ENCODE measurements at regions of chr11 and their contacts with region 1.

Region 1: DNA sequence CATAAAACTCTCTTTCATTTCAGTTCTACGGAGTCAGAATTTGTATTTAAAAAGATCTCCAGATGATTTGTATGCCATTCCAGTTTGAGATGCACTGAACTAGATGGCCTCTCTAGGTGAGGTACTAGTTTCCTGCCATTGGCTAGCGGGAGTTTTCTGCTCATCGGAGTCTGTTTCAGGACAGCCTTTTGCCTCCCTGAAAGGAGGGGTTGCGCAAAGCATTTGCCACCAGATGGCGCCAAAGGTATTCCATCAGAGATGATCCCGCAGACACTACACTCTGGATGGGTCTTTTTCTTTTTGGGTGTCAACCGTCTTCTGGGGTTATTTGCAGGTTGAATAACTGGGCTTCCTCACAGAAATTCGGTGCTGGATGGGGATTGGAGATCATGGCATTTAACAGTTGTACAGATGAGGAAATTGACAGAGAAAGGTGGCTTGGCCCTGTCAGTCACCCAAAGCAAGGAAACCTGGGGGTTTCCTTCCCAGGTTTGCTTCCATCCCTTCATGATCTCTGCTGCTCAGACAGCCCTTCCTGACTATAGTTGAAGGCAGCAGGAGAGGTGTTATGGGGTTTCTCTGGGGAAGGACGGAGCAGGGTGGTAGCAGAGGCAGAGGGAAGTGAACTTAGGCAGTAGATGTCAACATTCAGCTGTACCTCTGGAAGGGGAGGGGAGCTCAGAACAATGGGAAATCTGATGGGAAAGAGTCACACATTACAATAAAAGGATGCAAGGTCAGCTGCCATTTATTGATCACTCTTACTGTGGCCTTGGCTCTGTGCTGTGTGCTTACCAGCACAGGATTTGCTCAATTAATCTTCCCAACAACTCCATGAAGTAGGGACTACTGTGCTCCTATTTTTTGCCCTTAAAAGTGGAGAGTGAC is 81.6 kb downstream of the CCDC81 start:
- DNase-seq: peak; percentile 75 to 92
- ATAC-seq: peak; percentile 92

Region 2: GRCh38 chr11:85977751-85978160 is 478.5 kb before region 1 on chr11:
- intact Hi-C with region 1: no loop called
- DNase-seq: no peak
- ATAC-seq: no peak

Region 3: GRCh38 chr11:86370922-86371594 is 85.2 kb before region 1 on chr11:
- intact Hi-C with region 1: no loop called
- DNase-seq: no peak
- ATAC-seq: no peak

Region 4: GRCh38 chr11:86608251-86608799 is 152.0 kb after region 1 on chr11:
- intact Hi-C with region 1: loop called in 1 of 2 experiments (anchors 5 kb)
- DNase-seq: peak in 1 of 2 donors; percentile 62
- ATAC-seq: peak; percentile 89

Region 5: GRCh38 chr11:86818466-86819192 is 362.3 kb after region 1 on chr11:
- intact Hi-C with region 1: loop called (anchors 2 to 10 kb)
- DNase-seq: no peak
- ATAC-seq: peak; percentile 63

Measured in left colon (tissue), 2 donors.